Heart left ventricle (tissue), 16 donors: ENCODE measurements at regions of chr3 and their contacts with region 1.

Region 1: DNA sequence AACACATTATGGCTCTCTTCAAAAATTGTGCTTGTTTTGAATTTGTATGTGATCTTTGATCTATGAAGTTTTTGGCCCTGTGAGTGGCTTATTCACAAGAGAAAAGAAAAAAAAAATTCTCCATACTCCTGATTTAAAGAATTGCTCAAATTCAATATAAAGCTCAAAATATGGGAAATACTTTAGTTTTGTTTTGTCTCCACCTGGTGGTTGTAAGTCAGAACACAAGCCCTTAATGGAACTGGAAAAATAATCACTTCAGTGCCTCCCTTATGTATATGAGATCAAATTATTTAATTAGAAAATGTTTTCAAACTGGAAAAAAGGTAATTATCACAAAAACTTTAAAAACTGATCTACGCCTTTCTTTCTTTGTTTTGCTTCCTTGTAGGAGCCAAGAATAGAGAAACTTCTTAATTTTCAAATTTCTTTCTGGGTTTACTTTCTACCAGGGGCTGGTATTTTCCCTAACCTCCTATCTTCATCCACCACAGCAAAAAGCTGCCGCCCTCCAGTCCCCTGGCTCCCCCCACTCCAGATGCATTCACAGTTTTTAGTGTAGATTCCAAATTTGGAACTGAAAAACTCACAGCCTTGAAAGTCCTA is 50.6 kb downstream of the SERP1 start:
- DNase-seq: no peak
- ATAC-seq: peak in 2 of 4 donors; percentile 41 to 52
- H3K4me3 ChIP-seq: no peak overlapping the region
- H3K27ac ChIP-seq: no peak overlapping the region
- H3K4me1 ChIP-seq: peaks cover 0 to 5% (median 0%) of the 10 kb centered on the region in 12 donors
- H3K27me3 ChIP-seq: no peaks in the 10 kb centered on the region
- CTCF ChIP-seq: peak; percentile 70 to 87 (median 84)
- POLR2A ChIP-seq: no peak

Region 2: GRCh38 chr3:149936812-149937233 is 558.8 kb before region 1 on chr3:
- intact Hi-C with region 1: loop called in 4 of 10 experiments (anchors 10 kb)
- DNase-seq: peak; percentile 32 to 58 (median 43)
- ATAC-seq: peak; percentile 32 to 81 (median 74)
- H3K4me3 ChIP-seq: peak overlapping the region in 1 of 12 donors; percentile 35
- H3K27ac ChIP-seq: no peak overlapping the region
- H3K4me1 ChIP-seq: peaks cover 0 to 26% (median 10%) of the 10 kb centered on the region in 12 donors
- H3K27me3 ChIP-seq: no peaks in the 10 kb centered on the region
- CTCF ChIP-seq: peak; percentile 51 to 82 (median 70)
- POLR2A ChIP-seq: no peak

Region 3: DNA sequence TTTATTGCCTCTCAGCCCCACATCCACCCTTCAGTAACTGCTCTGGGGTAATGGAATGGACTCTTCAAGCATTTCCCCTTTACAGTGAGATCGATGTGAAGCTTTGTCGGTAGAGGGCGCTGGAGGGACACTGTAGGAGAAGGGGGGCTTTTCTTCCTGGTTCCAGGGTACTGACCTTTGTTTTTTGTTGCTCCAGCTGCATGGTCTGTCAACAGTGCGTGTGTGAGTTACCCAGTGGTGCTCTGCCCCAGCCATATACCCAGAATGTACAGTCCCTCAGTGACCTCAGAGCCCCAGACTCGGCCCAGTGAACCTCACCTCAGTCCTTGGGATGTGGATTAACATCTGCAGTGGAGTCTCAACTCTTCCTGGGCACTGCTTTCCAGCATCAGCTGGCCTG is 267.8 kb before region 1 on chr3:
- intact Hi-C with region 1: loop called (anchors 2 to 10 kb)
- DNase-seq: peak in 4 of 5 donors; percentile 25 to 43 (median 35)
- ATAC-seq: peak in 3 of 4 donors; percentile 17 to 59 (median 28)
- H3K4me3 ChIP-seq: no peak overlapping the region
- H3K27ac ChIP-seq: no peak overlapping the region
- H3K4me1 ChIP-seq: peaks cover 0 to 20% (median 2%) of the 10 kb centered on the region in 12 donors
- H3K27me3 ChIP-seq: peaks cover 0 to 6% (median 0%) of the 10 kb centered on the region in 9 donors
- CTCF ChIP-seq: peak; percentile 44 to 69 (median 57)
- POLR2A ChIP-seq: no peak

Region 4: GRCh38 chr3:150286390-150287147 is 209.1 kb before region 1 on chr3:
- intact Hi-C with region 1: loop called (anchors 1 to 5 kb)
- DNase-seq: no peak
- ATAC-seq: peak; percentile 50 to 79 (median 71)
- H3K4me3 ChIP-seq: no peak overlapping the region
- H3K27ac ChIP-seq: no peak overlapping the region
- H3K4me1 ChIP-seq: no peaks in the 10 kb centered on the region
- H3K27me3 ChIP-seq: no peaks in the 10 kb centered on the region
- CTCF ChIP-seq: peak; percentile 39 to 70 (median 58)
- POLR2A ChIP-seq: no peak